ENCODE measurements at regions of chr4 and their contacts with region 1.

Region 1: GRCh38 chr4:931960-932712 is at the starts of genes GAK and TMEM175:
- DNase-seq: peak; percentile 92 to 97
- H3K4me3 ChIP-seq: peak within 1 kb of the TSS; percentile 82
- H3K4me3 Mint-ChIP-seq: peak within 1 kb of the TSS; percentile 86
- H3K27ac Mint-ChIP-seq: peak within 1 kb of the TSS; percentile 92
- H3K4me1 ChIP-seq: peaks cover 11% of the 10 kb centered on the region
- H3K4me1 Mint-ChIP-seq: peaks cover 10% of the 10 kb centered on the region
- H3K27me3 ChIP-seq: no peaks in the 10 kb centered on the region
- H3K27me3 Mint-ChIP-seq: no peaks in the 10 kb centered on the region
- CTCF ChIP-seq: no peak
- total RNA-seq, gene GAK: 126 TPM in 2 replicates
- total RNA-seq, gene TMEM175: 22.3 and 30.2 TPM in 2 replicates

Region 2: DNA sequence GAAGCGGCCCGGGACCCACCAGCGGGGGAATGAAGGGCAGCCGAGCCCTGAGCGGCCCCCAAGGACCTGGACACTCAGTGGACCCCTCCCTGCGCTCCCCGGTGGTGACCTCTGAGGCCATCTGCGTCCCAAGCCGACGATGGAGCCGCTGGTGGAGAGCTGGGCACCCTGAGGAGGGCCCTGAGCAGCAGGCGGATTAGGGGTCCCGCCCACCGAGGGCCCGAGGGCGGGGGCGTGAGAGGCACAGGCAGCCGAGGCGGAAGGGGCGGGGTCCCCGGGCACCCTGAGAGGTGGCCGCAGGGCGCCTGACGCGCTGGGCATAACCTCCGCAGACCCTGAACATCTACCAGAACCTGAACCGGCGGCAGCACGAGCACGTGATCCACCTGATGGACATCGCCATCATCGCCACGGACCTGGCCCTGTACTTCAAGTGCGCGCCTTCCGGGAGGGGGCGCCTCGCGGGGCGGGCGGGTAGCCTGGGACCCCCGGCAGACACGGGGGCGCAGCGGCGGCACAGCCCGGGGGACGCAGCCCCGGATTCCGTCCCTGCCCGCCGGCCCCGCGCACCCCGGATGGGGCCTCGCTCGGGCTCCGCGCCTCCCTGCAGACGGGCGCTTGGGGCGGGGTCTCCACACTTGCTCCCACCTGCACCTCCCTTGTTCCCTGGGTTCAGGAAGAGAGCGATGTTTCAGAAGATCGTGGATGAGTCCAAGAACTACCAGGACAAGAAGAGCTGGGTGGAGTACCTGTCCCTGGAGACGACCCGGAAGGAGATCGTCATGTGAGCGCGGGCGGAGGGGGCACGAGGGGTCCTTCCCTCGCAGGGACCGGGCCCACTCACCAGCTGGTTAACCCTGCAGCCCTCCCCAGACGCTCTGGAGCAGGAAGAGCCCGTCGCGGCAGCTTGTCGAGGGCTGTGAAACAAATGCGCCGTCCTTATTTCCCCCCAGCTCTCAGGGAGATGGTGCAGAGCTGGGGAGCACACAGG is 268.4 kb before region 1 on chr4:
- CTCF ChIA-PET with region 1: no interaction called
- POLR2A ChIA-PET with region 1: no interaction called
- intact Hi-C with region 1: no loop called
- DNase-seq: no peak
- H3K4me3 ChIP-seq: no peak overlapping the region
- H3K4me3 Mint-ChIP-seq: no peak overlapping the region
- H3K27ac Mint-ChIP-seq: no peak overlapping the region
- H3K4me1 ChIP-seq: no peaks in the 10 kb centered on the region
- H3K4me1 Mint-ChIP-seq: no peaks in the 10 kb centered on the region
- H3K27me3 ChIP-seq: no peaks in the 10 kb centered on the region
- H3K27me3 Mint-ChIP-seq: no peaks in the 10 kb centered on the region
- CTCF ChIP-seq: no peak

Region 3: DNA sequence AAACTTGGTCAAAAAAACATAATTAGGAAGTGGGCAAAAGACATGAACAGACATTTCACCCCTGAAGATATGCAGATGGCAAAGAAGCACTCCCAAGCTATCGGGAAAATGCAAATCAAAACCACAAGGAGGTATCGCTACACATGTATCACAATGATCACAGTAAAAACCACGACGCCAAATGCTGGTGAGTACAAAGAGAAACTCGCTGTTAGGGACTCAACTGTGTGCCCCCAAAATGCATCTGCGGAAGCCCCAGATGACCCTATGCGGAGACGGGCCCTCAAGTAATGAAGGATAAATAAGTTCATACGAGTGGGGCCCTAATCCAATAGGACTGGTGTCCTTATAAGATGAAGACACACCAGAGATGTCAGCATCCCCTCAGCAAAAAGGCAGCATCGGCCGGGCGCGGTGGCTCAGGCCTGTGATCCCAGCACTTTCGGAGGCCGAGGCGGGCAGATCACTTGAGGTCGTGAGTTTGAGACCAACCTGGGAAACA is 10.3 kb before region 1 on chr4:
- CTCF ChIA-PET with region 1: no interaction called
- POLR2A ChIA-PET with region 1: no interaction called
- intact Hi-C with region 1: no loop called
- DNase-seq: no peak
- H3K4me3 ChIP-seq: no peak overlapping the region
- H3K4me3 Mint-ChIP-seq: no peak overlapping the region
- H3K27ac Mint-ChIP-seq: no peak overlapping the region
- H3K4me1 ChIP-seq: no peaks in the 10 kb centered on the region
- H3K4me1 Mint-ChIP-seq: peaks cover 6% of the 10 kb centered on the region
- H3K27me3 ChIP-seq: no peaks in the 10 kb centered on the region
- H3K27me3 Mint-ChIP-seq: no peaks in the 10 kb centered on the region
- CTCF ChIP-seq: no peak

Region 4: DNA sequence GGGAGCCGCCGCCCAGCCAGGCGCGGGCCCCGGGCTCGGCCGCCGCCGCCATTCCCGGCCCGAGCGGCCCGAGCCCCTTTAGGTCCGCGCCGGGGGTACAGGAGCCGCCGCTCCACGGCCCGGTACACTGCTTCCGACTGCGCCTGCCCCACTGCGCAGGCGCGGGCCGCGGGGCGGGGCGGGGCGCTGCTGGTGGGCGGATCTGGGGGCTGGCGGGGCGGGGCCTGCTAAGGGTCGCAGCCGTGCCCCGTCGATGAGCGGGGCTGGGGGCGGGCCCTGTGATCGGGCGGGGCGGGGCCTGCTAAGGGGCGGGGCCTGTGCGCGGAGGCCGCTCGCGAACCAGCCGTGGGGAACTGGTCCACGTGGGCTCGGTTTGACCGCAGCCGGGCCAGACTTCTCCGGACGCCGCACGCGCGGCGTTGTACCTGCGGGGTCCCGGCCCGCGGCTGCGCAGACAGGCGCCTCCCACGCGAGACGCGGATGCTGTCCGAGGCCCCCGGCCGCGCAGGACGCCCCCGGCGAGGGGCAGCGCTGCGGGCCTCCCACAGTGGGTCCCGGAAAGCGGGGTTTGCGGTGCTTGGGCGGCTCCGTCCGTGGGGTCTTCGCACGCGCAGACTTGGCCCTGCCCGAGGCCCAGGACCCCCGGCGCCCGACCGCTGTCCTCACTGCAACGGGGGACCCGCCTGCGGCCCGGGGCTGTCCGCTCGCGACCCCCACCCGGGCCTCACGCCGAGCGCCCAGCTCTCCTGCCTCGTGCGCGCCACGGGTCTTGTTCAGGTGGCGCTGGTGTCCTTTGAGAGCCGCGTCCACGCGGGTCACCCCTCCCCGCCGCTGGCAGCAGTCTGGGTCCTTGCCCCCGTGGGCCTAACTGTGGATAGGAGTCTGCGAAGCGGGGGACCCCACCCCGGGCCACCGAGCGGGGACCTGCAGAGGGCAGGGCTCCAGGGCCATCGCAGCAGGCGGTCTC is 41.6 kb after region 1 on chr4 and contains the start of gene DGKQ:
- CTCF ChIA-PET with region 1: no interaction called
- POLR2A ChIA-PET with region 1: no interaction called
- intact Hi-C with region 1: loop called (anchors 5 kb)
- DNase-seq: peak; percentile 74 to 84
- H3K4me3 ChIP-seq: peak within 1 kb of the TSS; percentile 70
- H3K4me3 Mint-ChIP-seq: peak within 1 kb of the TSS; percentile 64
- H3K27ac Mint-ChIP-seq: no peak within 1 kb of the TSS
- H3K4me1 ChIP-seq: peaks cover 6% of the 10 kb centered on the region; the same call in 1 of the 2 replicates
- H3K4me1 Mint-ChIP-seq: no peaks in the 10 kb centered on the region
- H3K27me3 ChIP-seq: no peaks in the 10 kb centered on the region
- H3K27me3 Mint-ChIP-seq: no peaks in the 10 kb centered on the region
- CTCF ChIP-seq: no peak
- total RNA-seq, gene DGKQ: 13.9 and 14.1 TPM in 2 replicates

Region 5: DNA sequence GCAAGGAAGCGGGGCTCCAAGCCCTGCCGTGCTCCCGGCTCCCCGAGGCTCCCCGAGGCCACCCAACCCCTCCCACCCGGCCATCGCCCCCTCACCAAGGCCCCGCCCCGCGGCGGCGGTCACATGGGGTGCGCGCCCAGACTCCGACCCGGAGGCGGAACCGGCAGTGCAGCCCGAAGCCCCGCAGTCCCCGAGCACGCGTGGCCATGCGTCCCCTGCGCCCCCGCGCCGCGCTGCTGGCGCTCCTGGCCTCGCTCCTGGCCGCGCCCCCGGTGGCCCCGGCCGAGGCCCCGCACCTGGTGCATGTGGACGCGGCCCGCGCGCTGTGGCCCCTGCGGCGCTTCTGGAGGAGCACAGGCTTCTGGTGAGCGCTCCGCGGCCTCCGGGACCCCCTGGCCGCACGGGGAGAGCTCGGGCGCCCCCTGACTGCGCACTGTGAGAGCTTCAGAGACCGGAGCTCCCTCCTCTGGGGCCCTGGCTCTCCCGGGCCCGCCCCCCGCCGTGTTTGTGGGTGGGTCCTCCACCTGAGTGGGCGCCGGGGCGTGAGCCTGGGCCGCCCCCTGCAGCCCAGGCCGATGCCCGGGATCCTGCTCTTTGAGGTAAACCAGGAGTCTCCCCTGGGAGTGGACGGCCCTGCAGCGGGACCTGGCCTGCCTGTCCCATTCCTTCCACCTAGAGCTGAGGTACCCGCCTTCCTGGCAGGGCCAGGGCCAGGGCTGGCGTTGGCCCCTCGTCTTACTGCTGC is 54.9 kb after region 1 on chr4 and contains the start of gene IDUA:
- CTCF ChIA-PET with region 1: interaction called, 11 read pairs
- POLR2A ChIA-PET with region 1: interaction called, 10 read pairs
- intact Hi-C with region 1: loop called (anchors 5 kb)
- DNase-seq: peak; percentile 82 to 86
- H3K4me3 ChIP-seq: peak within 1 kb of the TSS; percentile 79
- H3K4me3 Mint-ChIP-seq: peak within 1 kb of the TSS; percentile 86
- H3K27ac Mint-ChIP-seq: peak within 1 kb of the TSS; percentile 72
- H3K4me1 ChIP-seq: peaks cover 32% of the 10 kb centered on the region
- H3K4me1 Mint-ChIP-seq: no peaks in the 10 kb centered on the region
- H3K27me3 ChIP-seq: no peaks in the 10 kb centered on the region
- H3K27me3 Mint-ChIP-seq: no peaks in the 10 kb centered on the region
- CTCF ChIP-seq: peak; percentile 33 to 69
- total RNA-seq, gene IDUA: 26.4 and 26.9 TPM in 2 replicates

Region 6: GRCh38 chr4:992297-993110 is 60.4 kb after region 1 on chr4:
- CTCF ChIA-PET with region 1: interaction called, 11 read pairs
- POLR2A ChIA-PET with region 1: interaction called, 10 read pairs
- intact Hi-C with region 1: loop called (anchors 5 kb)
- DNase-seq: peak; percentile 93 to 95
- H3K4me3 ChIP-seq: peak overlapping the region; percentile 42
- H3K4me3 Mint-ChIP-seq: peak overlapping the region; percentile 71
- H3K27ac Mint-ChIP-seq: peak overlapping the region; percentile 88
- H3K4me1 ChIP-seq: peaks cover 48% of the 10 kb centered on the region
- H3K4me1 Mint-ChIP-seq: no peaks in the 10 kb centered on the region
- H3K27me3 ChIP-seq: no peaks in the 10 kb centered on the region
- H3K27me3 Mint-ChIP-seq: no peaks in the 10 kb centered on the region
- CTCF ChIP-seq: no peak

Measured in Caco-2 (cell line).